ENCODE measurements at regions of chr15 and their contacts with region 1.

Region 1: GRCh38 chr15:24924621-24925020 is 30.2 kb upstream of the SNRPN start:
- DNase-seq: no peak
- H3K4me3 ChIP-seq: no peak overlapping the region
- H3K4me3 Mint-ChIP-seq: no peak overlapping the region
- H3K27ac ChIP-seq: no peak overlapping the region
- H3K27ac Mint-ChIP-seq: no peak overlapping the region
- H3K4me1 ChIP-seq: no peaks in the 10 kb centered on the region
- H3K4me1 Mint-ChIP-seq: no peaks in the 10 kb centered on the region
- H3K27me3 ChIP-seq: no peaks in the 10 kb centered on the region
- H3K27me3 Mint-ChIP-seq: peaks cover 0 to 1% (median 1%) of the 10 kb centered on the region in 3 donors
- CTCF ChIP-seq: no peak

Region 2: GRCh38 chr15:24633082-24633481 is 291.5 kb before region 1 on chr15:
- intact Hi-C with region 1: no loop called
- DNase-seq: no peak
- H3K4me3 ChIP-seq: no peak overlapping the region
- H3K4me3 Mint-ChIP-seq: no peak overlapping the region
- H3K27ac ChIP-seq: no peak overlapping the region
- H3K27ac Mint-ChIP-seq: no peak overlapping the region
- H3K4me1 ChIP-seq: no peaks in the 10 kb centered on the region
- H3K4me1 Mint-ChIP-seq: no peaks in the 10 kb centered on the region
- H3K27me3 ChIP-seq: no peaks in the 10 kb centered on the region
- H3K27me3 Mint-ChIP-seq: peaks cover 0 to 5% (median 0%) of the 10 kb centered on the region in 3 donors
- CTCF ChIP-seq: no peak

Region 3: GRCh38 chr15:24862726-24863521 is 61.7 kb before region 1 on chr15:
- intact Hi-C with region 1: loop called in 1 of 2 experiments (anchors 10 kb)
- DNase-seq: no peak
- H3K4me3 ChIP-seq: no peak overlapping the region
- H3K4me3 Mint-ChIP-seq: no peak overlapping the region
- H3K27ac ChIP-seq: no peak overlapping the region
- H3K27ac Mint-ChIP-seq: no peak overlapping the region
- H3K4me1 ChIP-seq: no peaks in the 10 kb centered on the region
- H3K4me1 Mint-ChIP-seq: no peaks in the 10 kb centered on the region
- H3K27me3 ChIP-seq: no peaks in the 10 kb centered on the region
- H3K27me3 Mint-ChIP-seq: peaks cover 0 to 4% (median 0%) of the 10 kb centered on the region in 3 donors
- CTCF ChIP-seq: no peak

Region 4: GRCh38 chr15:24886538-24886937 is 38.1 kb before region 1 on chr15:
- intact Hi-C with region 1: no loop called
- DNase-seq: no peak
- H3K4me3 ChIP-seq: no peak overlapping the region
- H3K4me3 Mint-ChIP-seq: no peak overlapping the region
- H3K27ac ChIP-seq: no peak overlapping the region
- H3K27ac Mint-ChIP-seq: no peak overlapping the region
- H3K4me1 ChIP-seq: no peaks in the 10 kb centered on the region
- H3K4me1 Mint-ChIP-seq: no peaks in the 10 kb centered on the region
- H3K27me3 ChIP-seq: no peaks in the 10 kb centered on the region
- H3K27me3 Mint-ChIP-seq: no peaks in the 10 kb centered on the region
- CTCF ChIP-seq: no peak

Region 5: GRCh38 chr15:24985224-24985623 is 60.6 kb after region 1 on chr15:
- intact Hi-C with region 1: loop called in 1 of 2 experiments (anchors 10 kb)
- DNase-seq: no peak
- H3K4me3 ChIP-seq: no peak overlapping the region
- H3K4me3 Mint-ChIP-seq: no peak overlapping the region
- H3K27ac ChIP-seq: no peak overlapping the region
- H3K27ac Mint-ChIP-seq: no peak overlapping the region
- H3K4me1 ChIP-seq: no peaks in the 10 kb centered on the region
- H3K4me1 Mint-ChIP-seq: no peaks in the 10 kb centered on the region
- H3K27me3 ChIP-seq: no peaks in the 10 kb centered on the region
- H3K27me3 Mint-ChIP-seq: peaks cover 0 to 2% (median 0%) of the 10 kb centered on the region in 3 donors
- CTCF ChIP-seq: no peak

Measured in CD14-positive monocyte (primary cell).